Posterior cingulate gyrus (tissue), 11 donors: ENCODE measurements at regions of chr1 and their contacts with region 1.

Region 1: DNA sequence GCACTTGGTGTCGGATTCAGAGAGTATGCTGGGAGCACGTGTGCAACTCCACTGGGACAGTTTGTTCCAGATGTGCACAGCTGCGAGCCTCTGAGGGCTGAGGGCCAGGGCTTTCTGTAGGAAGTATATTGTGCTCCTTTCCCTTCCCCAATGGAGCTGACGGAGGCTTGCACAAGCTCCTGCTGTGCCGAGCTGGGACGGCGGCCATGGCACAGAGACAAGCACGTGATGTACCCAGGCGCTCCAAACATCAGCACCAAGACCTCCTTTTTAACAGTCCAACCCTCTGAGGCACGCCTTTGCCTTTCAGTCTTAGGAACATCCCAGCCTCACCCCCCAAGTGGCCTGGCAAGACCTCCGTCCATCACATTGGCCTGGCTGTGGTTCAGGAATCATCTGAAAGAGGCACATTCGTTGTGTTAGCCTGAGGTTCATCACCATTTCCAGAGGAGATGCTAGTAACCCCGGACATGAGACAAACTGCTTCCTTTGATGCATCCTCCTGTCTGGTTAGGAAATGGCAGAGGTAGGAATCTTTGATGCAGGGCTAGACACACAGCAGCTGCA is 339.2 kb upstream of the KAZN start:
- DNase-seq: peak; percentile 83 to 99 (median 91)

Region 2: DNA sequence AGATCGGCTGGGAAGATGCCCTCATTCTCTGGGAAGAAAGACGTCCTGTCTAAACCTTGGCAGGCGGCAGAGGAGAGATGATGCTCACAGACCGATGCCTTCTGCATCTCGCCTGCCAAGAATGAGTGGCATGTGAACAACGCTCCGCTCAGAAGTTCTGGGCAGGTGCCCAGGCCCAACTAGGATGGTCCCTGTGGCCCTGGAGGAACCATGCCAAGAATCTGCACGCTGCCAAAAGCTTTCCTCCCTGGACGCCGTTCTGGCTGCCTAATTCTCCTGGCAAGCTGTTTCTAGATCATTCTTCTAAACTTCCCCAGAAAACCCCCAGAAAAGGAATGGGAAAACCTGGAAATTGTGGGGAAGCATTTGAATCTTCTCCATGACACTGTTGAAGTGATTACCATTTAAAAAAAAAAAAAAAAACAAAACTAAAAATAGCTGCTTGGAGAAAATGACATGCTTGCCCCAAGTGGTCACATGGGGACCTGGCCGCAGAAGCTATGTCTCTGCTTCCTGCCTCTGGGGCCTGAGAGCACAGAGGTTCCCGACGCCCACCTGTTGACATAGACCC is 118.4 kb before region 1 on chr1:
- intact Hi-C with region 1: loop called (anchors 10 kb)
- DNase-seq: peak in 9 of 10 donors; percentile 24 to 90 (median 47)